MCF 10A (cell line): ENCODE measurements at regions of chr7 and their contacts with region 1.

Region 1: GRCh38 chr7:17523813-17524741 is 225.6 kb downstream of the AHR start:
- DNase-seq: peak; percentile 96
- H3K4me3 Mint-ChIP-seq: peak overlapping the region; percentile 19
- H3K27ac Mint-ChIP-seq: peak overlapping the region; percentile 83
- H3K4me1 Mint-ChIP-seq: peaks cover 50% of the 10 kb centered on the region
- H3K27me3 Mint-ChIP-seq: no peaks in the 10 kb centered on the region
- CTCF ChIP-seq: no peak

Region 2: GRCh38 chr7:16951483-16952080 is 572.5 kb before region 1 on chr7:
- CTCF ChIA-PET with region 1: no interaction called
- POLR2A ChIA-PET with region 1: no interaction called
- intact Hi-C with region 1: no loop called
- DNase-seq: no peak
- H3K4me3 Mint-ChIP-seq: no peak overlapping the region
- H3K27ac Mint-ChIP-seq: no peak overlapping the region
- H3K4me1 Mint-ChIP-seq: peaks cover 10% of the 10 kb centered on the region
- H3K27me3 Mint-ChIP-seq: no peaks in the 10 kb centered on the region
- CTCF ChIP-seq: no peak

Region 3: GRCh38 chr7:17408245-17408903 is 115.7 kb before region 1 on chr7:
- CTCF ChIA-PET with region 1: interaction called, 3 read pairs
- POLR2A ChIA-PET with region 1: interaction called, 3 read pairs
- intact Hi-C with region 1: loop called (anchors 2 kb)
- DNase-seq: peak; percentile 97
- H3K4me3 Mint-ChIP-seq: peak overlapping the region; percentile 48
- H3K27ac Mint-ChIP-seq: peak overlapping the region; percentile 90
- H3K4me1 Mint-ChIP-seq: peaks cover 34% of the 10 kb centered on the region
- H3K27me3 Mint-ChIP-seq: no peaks in the 10 kb centered on the region
- CTCF ChIP-seq: no peak

Region 4: GRCh38 chr7:17548014-17548653 is 24.1 kb after region 1 on chr7:
- CTCF ChIA-PET with region 1: no interaction called
- POLR2A ChIA-PET with region 1: no interaction called
- intact Hi-C with region 1: no loop called
- DNase-seq: no peak
- H3K4me3 Mint-ChIP-seq: no peak overlapping the region
- H3K27ac Mint-ChIP-seq: no peak overlapping the region
- H3K4me1 Mint-ChIP-seq: peaks cover 20% of the 10 kb centered on the region
- H3K27me3 Mint-ChIP-seq: no peaks in the 10 kb centered on the region
- CTCF ChIP-seq: no peak